ENCODE measurements at regions of chr1 and their contacts with region 1.

Region 1: DNA sequence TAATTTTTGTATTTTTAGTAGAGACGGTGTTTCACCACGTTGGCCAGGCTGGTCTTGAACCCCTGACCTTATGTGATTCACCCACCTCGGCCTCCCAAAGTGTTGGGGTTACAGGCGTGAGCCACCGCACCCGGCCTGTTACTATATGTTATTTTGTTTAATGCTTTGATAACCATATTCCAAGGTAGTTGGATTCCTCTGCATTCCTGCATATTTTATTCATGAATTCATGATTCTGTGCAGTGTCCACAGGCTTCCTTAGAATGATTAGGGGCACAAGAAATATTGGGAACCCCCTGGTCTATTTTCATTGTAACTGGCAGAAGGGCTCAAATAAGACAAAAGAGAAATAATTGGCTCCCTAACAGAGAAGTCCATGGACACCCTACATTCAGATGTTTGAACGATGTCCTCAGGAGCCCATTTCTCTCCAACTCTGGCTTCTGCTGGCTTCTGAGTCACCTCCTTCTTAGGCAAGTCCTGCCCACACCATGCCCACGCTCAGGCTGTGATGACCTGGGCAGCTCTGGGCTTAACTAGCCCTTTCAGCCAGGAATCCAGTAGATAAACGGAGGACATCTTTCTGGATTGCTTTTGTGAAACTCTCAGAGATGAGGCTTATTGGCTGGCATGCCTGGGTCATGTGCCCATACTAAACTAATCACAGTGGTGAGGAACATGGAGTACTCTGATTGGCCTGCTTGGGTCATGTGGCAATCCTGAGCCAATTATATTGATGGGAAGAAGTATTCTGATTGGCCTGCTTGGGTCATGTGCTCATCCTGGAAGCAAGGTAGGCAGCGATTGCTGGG is 32.6 kb downstream of the TNFRSF8 start:
- DNase-seq: no peak
- H3K4me3 ChIP-seq: no peak overlapping the region
- H3K27ac ChIP-seq: no peak overlapping the region
- H3K27me3 ChIP-seq: no peaks in the 10 kb centered on the region
- CTCF ChIP-seq: no peak

Region 2: DNA sequence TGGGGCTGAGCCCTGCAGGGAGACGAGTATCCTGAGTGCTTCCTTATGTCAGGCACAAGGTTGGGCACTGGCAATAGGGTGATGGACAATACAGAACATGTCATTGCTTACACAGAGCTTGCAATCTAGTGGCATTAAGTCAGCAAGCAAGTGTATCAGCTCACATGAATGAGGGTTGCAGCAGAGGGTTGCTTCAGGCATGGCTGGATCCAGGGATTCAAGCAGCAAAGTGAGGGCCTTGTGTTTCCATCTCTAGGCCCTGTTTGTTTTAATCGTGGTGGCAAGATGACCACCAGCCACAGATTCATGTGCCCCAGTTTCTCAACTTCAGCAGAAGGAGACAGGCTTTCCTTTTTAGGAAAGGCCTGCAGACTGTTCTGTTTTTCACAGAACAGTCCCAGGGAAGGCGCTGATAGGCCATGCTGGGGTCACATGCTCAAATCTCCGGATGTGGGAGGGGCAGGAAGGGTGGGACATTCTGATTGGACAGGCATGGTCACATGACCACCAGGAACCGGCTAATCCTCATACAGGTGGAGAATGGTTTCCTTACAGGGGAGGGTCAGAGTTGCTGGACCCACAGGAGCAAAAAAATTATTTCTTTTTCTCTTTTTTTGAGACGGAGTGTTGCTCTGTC is 146.7 kb before region 1 on chr1:
- CTCF ChIA-PET with region 1: no interaction called
- POLR2A ChIA-PET with region 1: no interaction called
- DNase-seq: no peak
- H3K4me3 ChIP-seq: no peak overlapping the region
- H3K27ac ChIP-seq: no peak overlapping the region
- H3K27me3 ChIP-seq: no peaks in the 10 kb centered on the region
- CTCF ChIP-seq: no peak

Region 3: DNA sequence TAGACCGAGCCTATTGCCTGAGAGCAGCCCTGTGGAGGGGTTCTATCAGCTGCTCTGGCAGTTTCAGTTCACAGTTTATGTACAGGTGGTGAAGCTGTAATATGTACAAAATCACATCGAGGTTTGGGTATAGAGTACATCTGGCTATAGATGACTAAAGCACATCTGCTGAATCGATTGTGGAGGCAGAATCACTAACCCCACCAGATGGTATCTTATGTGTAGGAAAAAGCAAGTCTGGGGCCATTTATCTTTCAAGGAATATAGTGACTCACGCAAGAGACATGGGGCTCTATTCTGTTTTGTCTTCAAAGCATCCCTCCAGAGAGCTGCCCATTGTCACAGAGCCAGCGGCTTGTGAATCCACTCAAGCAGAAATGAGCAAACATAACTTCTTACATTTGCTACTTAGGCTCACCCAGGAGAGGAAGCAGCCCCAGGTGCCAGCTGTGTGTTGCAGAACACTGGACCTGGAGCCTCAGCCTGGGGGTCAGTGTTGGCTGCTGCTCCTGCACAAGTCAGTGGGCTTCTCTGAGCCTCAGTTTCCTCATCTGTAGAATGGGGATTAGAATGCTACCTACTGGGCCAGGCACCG is 55.1 kb before region 1 on chr1:
- CTCF ChIA-PET with region 1: no interaction called
- POLR2A ChIA-PET with region 1: no interaction called
- DNase-seq: peak; percentile 86
- H3K4me3 ChIP-seq: no peak overlapping the region
- H3K27ac ChIP-seq: no peak overlapping the region
- H3K27me3 ChIP-seq: peaks cover 8% of the 10 kb centered on the region
- CTCF ChIP-seq: no peak

Region 4: GRCh38 chr1:12078938-12079861 is 16.5 kb before region 1 on chr1:
- CTCF ChIA-PET with region 1: interaction called, 27 read pairs
- POLR2A ChIA-PET with region 1: no interaction called
- DNase-seq: peak; percentile 13
- H3K4me3 ChIP-seq: no peak overlapping the region
- H3K27ac ChIP-seq: no peak overlapping the region
- H3K27me3 ChIP-seq: peaks cover 9% of the 10 kb centered on the region
- CTCF ChIP-seq: peak; percentile 75

Region 5: DNA sequence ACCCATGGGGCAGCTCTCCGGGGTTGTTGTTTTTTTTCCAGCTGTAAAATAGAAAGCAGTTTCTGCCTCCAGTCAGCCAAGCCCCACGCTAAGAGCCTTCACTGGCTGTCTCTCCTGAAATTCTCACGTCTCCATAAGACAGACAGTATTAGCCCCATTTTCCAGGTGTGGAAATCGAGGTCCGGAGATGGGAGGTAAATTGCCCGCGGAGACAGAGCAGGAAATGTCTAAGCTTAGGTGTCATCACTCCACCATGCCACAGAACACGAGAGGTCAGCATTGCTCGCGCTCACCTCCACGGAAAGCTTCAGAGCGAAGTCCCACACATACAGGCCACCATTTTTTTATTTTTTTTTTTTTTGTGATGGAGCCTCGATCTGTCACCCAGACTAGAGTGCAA is 12.1 kb after region 1 on chr1:
- CTCF ChIA-PET with region 1: interaction called, 13 read pairs
- POLR2A ChIA-PET with region 1: no interaction called
- DNase-seq: no peak
- H3K4me3 ChIP-seq: no peak overlapping the region
- H3K27ac ChIP-seq: no peak overlapping the region
- H3K27me3 ChIP-seq: peaks cover 32% of the 10 kb centered on the region
- CTCF ChIP-seq: no peak

Region 6: GRCh38 chr1:12130466-12131130 is 34.9 kb after region 1 on chr1:
- CTCF ChIA-PET with region 1: no interaction called
- POLR2A ChIA-PET with region 1: no interaction called
- DNase-seq: no peak
- H3K4me3 ChIP-seq: no peak overlapping the region
- H3K27ac ChIP-seq: no peak overlapping the region
- H3K27me3 ChIP-seq: no peaks in the 10 kb centered on the region
- CTCF ChIP-seq: no peak

Region 7: GRCh38 chr1:12208764-12209494 is 113.3 kb after region 1 on chr1:
- CTCF ChIA-PET with region 1: no interaction called
- POLR2A ChIA-PET with region 1: no interaction called
- DNase-seq: peak; percentile 48
- H3K4me3 ChIP-seq: no peak overlapping the region
- H3K27ac ChIP-seq: no peak overlapping the region
- H3K27me3 ChIP-seq: peaks cover 6% of the 10 kb centered on the region
- CTCF ChIP-seq: peak; percentile 87

Measured in AG04450 (cell line).